ENCODE measurements at regions of chr17 and their contacts with region 1.

Region 1: GRCh38 chr17:76623271-76624146 is 20.0 kb downstream of the ST6GALNAC1 start:
- DNase-seq: peak; percentile 83
- ATAC-seq: peak; percentile 94
- H3K4me3 ChIP-seq: no peak overlapping the region
- H3K4me3 Mint-ChIP-seq: no peak overlapping the region
- H3K27ac ChIP-seq: no peak overlapping the region
- H3K27ac Mint-ChIP-seq: no peak overlapping the region
- H3K4me1 ChIP-seq: peaks cover 0 to 3% of the 10 kb centered on the region in 2 donors
- H3K4me1 Mint-ChIP-seq: peaks cover 2% of the 10 kb centered on the region
- H3K27me3 ChIP-seq: peaks cover 0 to 12% (median 1%) of the 10 kb centered on the region in 4 experiments
- H3K27me3 Mint-ChIP-seq: peaks cover 14% of the 10 kb centered on the region
- CTCF ChIP-seq: peak; percentile 100

Region 2: GRCh38 chr17:76304226-76305134 is 319.0 kb before region 1 on chr17:
- CTCF ChIA-PET with region 1: interaction called, 11 read pairs
- POLR2A ChIA-PET with region 1: no interaction called
- intact Hi-C with region 1: loop called (anchors 5 kb)
- DNase-seq: no peak
- ATAC-seq: no peak
- H3K4me3 ChIP-seq: no peak overlapping the region
- H3K4me3 Mint-ChIP-seq: no peak overlapping the region
- H3K27ac ChIP-seq: no peak overlapping the region
- H3K27ac Mint-ChIP-seq: no peak overlapping the region
- H3K4me1 ChIP-seq: no peaks in the 10 kb centered on the region
- H3K4me1 Mint-ChIP-seq: peaks cover 3% of the 10 kb centered on the region
- H3K27me3 ChIP-seq: no peaks in the 10 kb centered on the region
- H3K27me3 Mint-ChIP-seq: peaks cover 3% of the 10 kb centered on the region
- CTCF ChIP-seq: no peak

Region 3: DNA sequence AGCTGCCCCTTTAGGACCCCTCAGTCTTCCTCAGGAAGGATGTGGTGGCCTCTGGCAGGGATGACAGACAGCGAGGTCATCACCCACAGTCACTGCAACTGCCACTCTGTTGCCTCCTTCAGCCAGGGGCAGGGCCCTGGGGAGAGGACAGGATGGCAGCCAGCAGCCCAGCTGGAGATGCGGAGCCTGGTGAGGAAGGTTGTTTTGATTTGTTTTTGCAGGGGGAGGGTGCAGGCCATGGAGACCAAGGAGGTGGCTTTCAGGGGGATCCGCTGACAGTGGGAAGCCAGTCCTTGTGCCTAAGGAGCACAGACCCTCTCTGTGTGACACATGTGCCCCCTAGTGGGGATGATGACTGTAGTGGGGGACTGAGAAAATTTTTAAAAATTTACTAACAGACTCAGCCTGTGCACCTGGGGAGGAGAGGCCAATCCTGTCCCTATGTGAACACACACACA is 76.3 kb before region 1 on chr17:
- CTCF ChIA-PET with region 1: interaction called, 17 read pairs
- POLR2A ChIA-PET with region 1: no interaction called
- intact Hi-C with region 1: no loop called
- DNase-seq: peak; percentile 78
- ATAC-seq: peak; percentile 90
- H3K4me3 ChIP-seq: no peak overlapping the region
- H3K4me3 Mint-ChIP-seq: no peak overlapping the region
- H3K27ac ChIP-seq: no peak overlapping the region
- H3K27ac Mint-ChIP-seq: no peak overlapping the region
- H3K4me1 ChIP-seq: peaks cover 4 to 8% of the 10 kb centered on the region in 2 donors
- H3K4me1 Mint-ChIP-seq: peaks cover 7% of the 10 kb centered on the region
- H3K27me3 ChIP-seq: peaks cover 0 to 7% (median 3%) of the 10 kb centered on the region in 4 experiments
- H3K27me3 Mint-ChIP-seq: peaks cover 17% of the 10 kb centered on the region
- CTCF ChIP-seq: peak; percentile 66

Region 4: GRCh38 chr17:76567634-76568432 is 55.7 kb before region 1 on chr17:
- CTCF ChIA-PET with region 1: interaction called, 84 read pairs
- POLR2A ChIA-PET with region 1: no interaction called
- intact Hi-C with region 1: no loop called
- DNase-seq: peak; percentile 71
- ATAC-seq: peak; percentile 82
- H3K4me3 ChIP-seq: no peak overlapping the region
- H3K4me3 Mint-ChIP-seq: peak overlapping the region; percentile 41
- H3K27ac ChIP-seq: peak overlapping the region; percentile 31 to 56
- H3K27ac Mint-ChIP-seq: peak overlapping the region; percentile 88
- H3K4me1 ChIP-seq: peaks cover 19 to 21% of the 10 kb centered on the region in 2 donors
- H3K4me1 Mint-ChIP-seq: peaks cover 29% of the 10 kb centered on the region
- H3K27me3 ChIP-seq: no peaks in the 10 kb centered on the region
- H3K27me3 Mint-ChIP-seq: no peaks in the 10 kb centered on the region
- CTCF ChIP-seq: no peak

Region 5: DNA sequence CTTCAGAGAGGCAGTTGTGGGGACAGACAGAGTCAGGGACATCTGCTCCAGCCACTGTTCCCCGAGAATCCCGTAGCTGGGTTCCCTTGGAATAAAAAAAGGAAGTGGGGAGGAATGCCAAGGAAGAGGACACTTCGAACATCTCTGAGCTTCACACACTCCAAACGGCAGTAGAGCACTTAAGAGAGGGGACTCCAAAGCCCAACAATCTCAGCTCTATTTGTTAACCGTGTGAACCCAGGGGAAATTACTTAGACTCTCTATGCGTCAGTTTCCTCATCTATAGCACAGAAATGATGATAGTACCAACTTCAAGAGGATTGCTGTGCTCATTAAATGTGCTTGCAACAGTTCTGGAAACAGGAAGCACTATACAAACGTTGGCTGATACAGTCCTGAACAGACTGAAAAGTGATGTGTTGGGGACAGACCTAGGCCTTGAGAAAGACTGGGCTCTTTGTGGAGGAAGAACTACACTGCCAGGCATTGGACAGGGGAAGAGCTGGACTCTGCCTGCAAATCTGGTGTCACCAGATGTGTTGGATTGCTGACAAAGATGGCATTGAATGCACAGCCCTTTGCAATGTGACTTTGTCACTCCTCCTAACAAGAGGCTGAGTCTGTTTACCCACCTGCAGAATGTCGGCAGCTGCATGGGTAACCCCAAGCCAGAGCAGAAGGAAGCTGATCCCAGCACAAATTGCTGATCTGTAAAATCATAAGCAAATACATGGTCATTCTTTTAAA is 25.6 kb before region 1 on chr17:
- CTCF ChIA-PET with region 1: interaction called, 20 read pairs
- POLR2A ChIA-PET with region 1: no interaction called
- intact Hi-C with region 1: no loop called
- DNase-seq: no peak
- ATAC-seq: no peak
- H3K4me3 ChIP-seq: no peak overlapping the region
- H3K4me3 Mint-ChIP-seq: no peak overlapping the region
- H3K27ac ChIP-seq: no peak overlapping the region
- H3K27ac Mint-ChIP-seq: no peak overlapping the region
- H3K4me1 ChIP-seq: no peaks in the 10 kb centered on the region
- H3K4me1 Mint-ChIP-seq: no peaks in the 10 kb centered on the region
- H3K27me3 ChIP-seq: peaks cover 0 to 2% (median 0%) of the 10 kb centered on the region in 4 experiments
- H3K27me3 Mint-ChIP-seq: peaks cover 49% of the 10 kb centered on the region
- CTCF ChIP-seq: no peak

Region 6: GRCh38 chr17:76640546-76641380 is 17.3 kb after region 1 on chr17:
- CTCF ChIA-PET with region 1: interaction called, 20 read pairs
- POLR2A ChIA-PET with region 1: no interaction called
- intact Hi-C with region 1: no loop called
- DNase-seq: no peak
- ATAC-seq: no peak
- H3K4me3 ChIP-seq: no peak overlapping the region
- H3K4me3 Mint-ChIP-seq: no peak overlapping the region
- H3K27ac ChIP-seq: no peak overlapping the region
- H3K27ac Mint-ChIP-seq: no peak overlapping the region
- H3K4me1 ChIP-seq: no peaks in the 10 kb centered on the region
- H3K4me1 Mint-ChIP-seq: no peaks in the 10 kb centered on the region
- H3K27me3 ChIP-seq: peaks cover 0 to 15% (median 6%) of the 10 kb centered on the region in 4 experiments
- H3K27me3 Mint-ChIP-seq: peaks cover 28% of the 10 kb centered on the region
- CTCF ChIP-seq: no peak